ENCODE measurements at regions of chr9 and their contacts with region 1.

Region 1: DNA sequence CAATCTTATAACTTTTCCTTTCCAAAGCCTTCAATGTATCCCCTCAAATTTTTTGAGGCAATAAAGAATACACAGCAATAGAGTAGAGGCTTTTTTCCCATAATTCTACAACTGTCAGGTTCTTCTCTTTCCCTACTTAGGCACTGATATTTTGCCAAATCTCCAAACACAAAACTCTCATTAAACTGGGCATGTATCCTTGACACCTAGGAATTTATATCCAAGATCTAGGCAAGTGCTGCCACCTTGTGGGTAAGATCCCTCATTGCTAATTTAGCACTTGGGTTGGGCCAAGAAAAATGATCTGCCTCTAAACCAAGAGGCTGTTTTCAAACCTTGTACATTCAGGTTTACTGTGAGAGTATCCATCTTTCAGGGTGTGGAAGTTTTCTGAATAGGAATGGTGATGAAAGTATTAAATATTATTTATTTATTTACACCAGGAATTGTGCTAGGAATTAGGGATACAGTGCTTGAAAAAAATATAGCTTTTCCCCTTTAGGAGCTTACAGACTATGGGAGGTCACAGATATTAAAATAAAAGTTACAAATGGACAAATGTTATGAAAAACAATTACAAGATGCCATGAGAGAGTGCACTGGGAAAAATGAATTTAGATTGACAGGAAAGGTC is 17.6 kb downstream of the TSTD2 start:
- DNase-seq: peak in 1 of 2 donors; percentile 59
- ATAC-seq: peak; percentile 84

Region 2: GRCh38 chr9:97406620-97407177 is 208.9 kb before region 1 on chr9:
- intact Hi-C with region 1: loop called in 1 of 2 experiments (anchors 10 kb)
- DNase-seq: no peak
- ATAC-seq: peak; percentile 61

Region 3: GRCh38 chr9:97468658-97469448 is 146.7 kb before region 1 on chr9:
- intact Hi-C with region 1: loop called in 1 of 2 experiments (anchors 5 kb)
- DNase-seq: peak; percentile 61 to 66
- ATAC-seq: peak; percentile 98

Region 4: GRCh38 chr9:97696803-97697601 is 81.4 kb after region 1 on chr9 and contains the start of gene XPA:
- intact Hi-C with region 1: no loop called
- DNase-seq: peak; percentile 97 to 98
- ATAC-seq: peak; percentile 97
- total RNA-seq, gene XPA: 10.0 to 10.1 TPM